ENCODE measurements at regions of chr19 and their contacts with region 1.

Region 1: DNA sequence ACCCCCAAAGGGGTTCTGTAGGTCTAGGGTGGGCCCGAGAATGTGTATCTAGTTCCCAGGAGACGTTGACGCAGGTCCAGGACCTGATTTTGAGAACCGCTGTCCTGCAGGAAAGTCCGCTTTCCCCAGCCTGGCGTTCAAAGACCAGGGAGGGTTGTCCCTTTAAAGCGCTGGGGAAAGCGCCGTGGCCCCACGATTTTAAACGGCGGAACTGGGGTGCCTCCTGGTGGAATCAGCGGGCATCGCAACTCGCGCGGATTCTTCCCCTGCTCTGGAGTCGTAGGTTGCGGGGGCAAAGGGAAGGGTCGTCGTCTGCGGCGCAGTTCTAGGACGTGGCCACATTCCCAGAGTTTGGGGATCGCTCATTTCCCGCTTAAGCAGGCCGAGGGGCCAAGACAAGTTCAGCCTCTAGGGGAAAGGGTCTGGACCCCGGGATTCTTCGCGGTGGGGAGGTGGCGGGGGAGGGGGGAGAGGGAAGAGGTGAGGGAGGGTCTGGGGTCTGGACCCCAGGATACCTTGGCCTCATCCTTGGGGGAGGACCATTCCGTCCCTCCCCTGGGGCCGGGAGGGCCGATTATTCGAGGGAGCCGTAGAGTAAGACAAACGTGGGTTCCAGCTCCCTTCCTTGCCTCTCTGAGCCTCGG is 7.7 kb downstream of the PNMA8B start:
- DNase-seq: peak; percentile 73 to 83
- ATAC-seq: peak; percentile 65 to 92 (median 90)
- H3K4me3 ChIP-seq: no peak overlapping the region
- H3K4me3 Mint-ChIP-seq: no peak overlapping the region
- H3K27ac ChIP-seq: no peak overlapping the region
- H3K27ac Mint-ChIP-seq: no peak overlapping the region
- H3K4me1 ChIP-seq: peaks cover 19% of the 10 kb centered on the region
- H3K4me1 Mint-ChIP-seq: peaks cover 0 to 9% of the 10 kb centered on the region in 2 donors
- H3K27me3 ChIP-seq: peaks cover 49% of the 10 kb centered on the region
- H3K27me3 Mint-ChIP-seq: peaks cover 62 to 63% of the 10 kb centered on the region in 2 donors
- CTCF ChIP-seq: peak; percentile 85

Region 2: GRCh38 chr19:46030812-46031550 is 456.9 kb before region 1 on chr19:
- intact Hi-C with region 1: loop called (anchors 1 kb)
- DNase-seq: no peak
- ATAC-seq: no peak
- H3K4me3 ChIP-seq: no peak overlapping the region
- H3K4me3 Mint-ChIP-seq: no peak overlapping the region
- H3K27ac ChIP-seq: no peak overlapping the region
- H3K27ac Mint-ChIP-seq: no peak overlapping the region
- H3K4me1 ChIP-seq: peaks cover 2% of the 10 kb centered on the region
- H3K4me1 Mint-ChIP-seq: peaks cover 5 to 13% of the 10 kb centered on the region in 2 donors
- H3K27me3 ChIP-seq: peaks cover 5% of the 10 kb centered on the region
- H3K27me3 Mint-ChIP-seq: peaks cover 32 to 34% of the 10 kb centered on the region in 2 donors
- CTCF ChIP-seq: no peak

Region 3: DNA sequence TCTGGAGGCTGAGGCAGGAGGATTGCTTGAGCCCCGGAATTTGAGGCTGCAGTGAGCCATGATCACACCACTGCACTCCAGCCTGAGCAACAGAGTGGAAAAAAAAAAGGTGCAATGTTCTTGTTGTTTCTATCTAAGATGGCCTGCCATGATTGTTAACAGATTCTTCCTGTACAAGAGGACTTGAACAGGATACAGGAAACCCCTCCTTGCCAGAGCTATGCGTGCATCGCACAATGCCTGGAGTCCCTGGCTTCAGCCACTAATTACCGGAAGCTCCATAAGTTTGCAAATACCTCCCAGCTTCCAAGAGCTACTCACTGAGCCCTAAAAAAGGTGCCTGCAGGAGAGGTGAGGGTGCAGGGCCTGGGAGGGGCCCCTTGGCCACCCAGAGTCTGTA is 204.2 kb before region 1 on chr19:
- intact Hi-C with region 1: loop called (anchors 1 kb)
- DNase-seq: no peak
- ATAC-seq: no peak
- H3K4me3 ChIP-seq: no peak overlapping the region
- H3K4me3 Mint-ChIP-seq: no peak overlapping the region
- H3K27ac ChIP-seq: no peak overlapping the region
- H3K27ac Mint-ChIP-seq: no peak overlapping the region
- H3K4me1 ChIP-seq: no peaks in the 10 kb centered on the region
- H3K4me1 Mint-ChIP-seq: no peaks in the 10 kb centered on the region
- H3K27me3 ChIP-seq: no peaks in the 10 kb centered on the region
- H3K27me3 Mint-ChIP-seq: peaks cover 4 to 6% of the 10 kb centered on the region in 2 donors
- CTCF ChIP-seq: no peak

Region 4: GRCh38 chr19:46346821-46347571 is 140.9 kb before region 1 on chr19 and contains the start of gene PPP5C:
- intact Hi-C with region 1: loop called (anchors 1 kb)
- DNase-seq: peak; percentile 83 to 91
- ATAC-seq: peak; percentile 75 to 87 (median 82)
- H3K4me3 ChIP-seq: peak within 1 kb of the TSS; percentile 99
- H3K4me3 Mint-ChIP-seq: peak within 1 kb of the TSS; percentile 94
- H3K27ac ChIP-seq: peak within 1 kb of the TSS; percentile 90
- H3K27ac Mint-ChIP-seq: peak within 1 kb of the TSS; percentile 90 to 94
- H3K4me1 ChIP-seq: peaks cover 54% of the 10 kb centered on the region
- H3K4me1 Mint-ChIP-seq: peaks cover 48 to 54% of the 10 kb centered on the region in 2 donors
- H3K27me3 ChIP-seq: no peaks in the 10 kb centered on the region
- H3K27me3 Mint-ChIP-seq: peaks cover 0 to 4% of the 10 kb centered on the region in 2 donors
- CTCF ChIP-seq: peak; percentile 77
- total RNA-seq, gene PPP5C: 95.4 to 106 (median 98.4) TPM

Region 5: GRCh38 chr19:46392243-46392801 is 95.6 kb before region 1 on chr19:
- intact Hi-C with region 1: loop called (anchors 1 kb)
- DNase-seq: no peak
- ATAC-seq: no peak
- H3K4me3 ChIP-seq: no peak overlapping the region
- H3K4me3 Mint-ChIP-seq: no peak overlapping the region
- H3K27ac ChIP-seq: no peak overlapping the region
- H3K27ac Mint-ChIP-seq: peak overlapping the region; percentile 6 to 34
- H3K4me1 ChIP-seq: peaks cover 4% of the 10 kb centered on the region
- H3K4me1 Mint-ChIP-seq: peaks cover 5 to 6% of the 10 kb centered on the region in 2 donors
- H3K27me3 ChIP-seq: no peaks in the 10 kb centered on the region
- H3K27me3 Mint-ChIP-seq: no peaks in the 10 kb centered on the region
- CTCF ChIP-seq: no peak

Region 6: DNA sequence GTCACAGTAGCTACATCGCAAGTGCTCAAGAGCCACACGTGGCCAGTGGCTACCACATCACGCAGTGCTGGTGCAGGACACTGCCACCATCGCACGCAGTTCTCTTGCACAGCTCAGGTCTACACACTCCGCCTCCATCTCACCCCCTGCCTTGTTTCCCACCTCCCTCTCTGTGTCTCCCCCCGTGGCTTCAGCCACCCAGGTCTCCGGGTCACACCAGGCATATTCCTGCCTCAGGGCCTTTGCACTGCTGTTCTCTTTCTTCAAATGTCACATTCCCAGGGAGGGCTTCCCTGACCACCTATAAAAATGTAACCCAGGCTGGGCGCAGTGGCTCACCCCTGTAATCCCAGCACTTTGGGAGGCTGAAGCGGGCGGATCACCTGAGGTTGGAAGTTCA is 85.2 kb before region 1 on chr19:
- intact Hi-C with region 1: loop called (anchors 2 kb)
- DNase-seq: no peak
- ATAC-seq: no peak
- H3K4me3 ChIP-seq: no peak overlapping the region
- H3K4me3 Mint-ChIP-seq: no peak overlapping the region
- H3K27ac ChIP-seq: no peak overlapping the region
- H3K27ac Mint-ChIP-seq: no peak overlapping the region
- H3K4me1 ChIP-seq: peaks cover 27% of the 10 kb centered on the region
- H3K4me1 Mint-ChIP-seq: peaks cover 22 to 24% of the 10 kb centered on the region in 2 donors
- H3K27me3 ChIP-seq: peaks cover 28% of the 10 kb centered on the region
- H3K27me3 Mint-ChIP-seq: peaks cover 31 to 34% of the 10 kb centered on the region in 2 donors
- CTCF ChIP-seq: no peak

Region 7: DNA sequence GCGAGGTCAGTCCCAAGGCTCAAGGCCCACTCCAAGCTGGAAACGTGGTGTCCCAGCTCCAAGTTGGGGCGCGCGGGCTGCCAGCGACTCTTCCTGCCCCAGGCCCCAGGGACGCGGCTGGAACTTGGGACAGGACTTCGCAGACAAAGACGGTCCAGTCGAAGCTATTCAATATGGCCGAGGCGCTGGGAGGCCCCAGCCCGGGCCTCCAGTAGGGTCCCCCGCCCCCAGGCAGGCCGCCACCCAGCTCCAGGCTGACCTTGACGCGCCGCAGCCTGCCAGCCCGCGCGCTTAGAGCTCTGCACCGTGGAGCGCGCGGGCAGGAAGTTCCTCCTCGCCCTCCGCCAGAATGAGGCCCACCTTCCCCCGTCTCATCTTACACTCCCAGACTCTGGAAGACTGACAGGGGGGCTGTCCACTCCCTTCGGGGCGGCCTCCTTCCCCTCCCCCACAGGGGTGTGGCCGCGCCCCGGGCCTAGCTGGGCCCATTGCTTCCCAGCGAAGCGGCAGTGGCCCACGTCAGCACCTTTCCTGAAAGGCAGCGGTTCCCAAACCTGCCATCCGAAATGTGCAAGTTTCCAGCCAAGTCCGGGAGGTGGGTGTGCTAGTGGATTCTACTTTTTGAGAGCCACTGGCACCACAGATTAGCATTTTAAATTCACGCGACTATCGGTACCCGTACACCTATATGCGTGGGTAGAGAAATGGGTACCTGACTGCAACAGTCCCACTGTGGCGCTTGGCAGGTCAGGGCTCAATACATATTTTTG is 74.5 kb before region 1 on chr19 and contains the start of gene CCDC8:
- intact Hi-C with region 1: no loop called
- DNase-seq: no peak
- ATAC-seq: no peak
- H3K4me3 ChIP-seq: no peak within 1 kb of the TSS
- H3K4me3 Mint-ChIP-seq: no peak within 1 kb of the TSS
- H3K27ac ChIP-seq: no peak within 1 kb of the TSS
- H3K27ac Mint-ChIP-seq: no peak within 1 kb of the TSS
- H3K4me1 ChIP-seq: no peaks in the 10 kb centered on the region
- H3K4me1 Mint-ChIP-seq: no peaks in the 10 kb centered on the region
- H3K27me3 ChIP-seq: peaks cover 41% of the 10 kb centered on the region
- H3K27me3 Mint-ChIP-seq: peaks cover 32 to 54% of the 10 kb centered on the region in 2 donors
- CTCF ChIP-seq: no peak
- total RNA-seq, gene CCDC8: not detected

Region 8: DNA sequence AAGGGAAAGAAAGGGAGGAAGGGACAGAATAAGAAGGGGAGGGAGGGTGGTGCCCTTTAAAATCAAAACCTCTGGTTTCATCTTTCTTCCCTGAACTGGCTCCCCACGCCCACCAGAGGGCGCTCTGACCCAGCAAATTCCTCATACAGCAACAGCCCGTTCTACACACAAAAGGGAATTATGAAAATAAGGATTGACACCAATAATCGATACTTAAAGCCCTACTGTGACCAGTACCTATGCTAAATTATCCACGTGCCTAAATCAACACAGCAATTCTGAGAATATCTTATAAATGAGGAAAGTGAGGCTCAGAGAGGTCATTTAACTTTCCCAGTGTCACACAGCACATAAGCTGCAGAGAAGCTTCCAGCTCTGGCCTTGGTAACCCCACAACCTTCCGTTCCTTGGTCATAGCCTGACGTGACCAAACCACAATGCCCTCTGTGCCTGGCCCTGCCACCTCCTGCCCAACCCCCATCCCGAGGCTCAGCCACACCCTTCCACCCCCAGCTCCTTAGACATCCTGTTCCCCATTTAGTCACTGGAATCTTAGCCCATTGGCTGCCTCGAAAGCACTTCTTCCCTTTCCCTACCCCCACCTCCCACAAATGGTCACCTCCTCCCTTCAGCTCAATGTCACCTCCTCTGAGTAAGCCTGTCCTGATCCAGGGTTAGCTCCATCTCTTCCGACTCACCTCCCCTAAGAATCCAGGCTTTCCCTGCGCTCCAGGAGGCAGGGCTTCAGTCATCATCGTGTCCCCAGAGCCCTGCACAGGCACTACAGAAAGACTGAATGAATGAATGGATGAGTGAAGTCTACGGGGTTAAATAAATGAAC is 41.9 kb after region 1 on chr19:
- intact Hi-C with region 1: no loop called
- DNase-seq: peak; percentile 67 to 89
- ATAC-seq: peak; percentile 59 to 78 (median 70)
- H3K4me3 ChIP-seq: no peak overlapping the region
- H3K4me3 Mint-ChIP-seq: no peak overlapping the region
- H3K27ac ChIP-seq: no peak overlapping the region
- H3K27ac Mint-ChIP-seq: no peak overlapping the region
- H3K4me1 ChIP-seq: peaks cover 21% of the 10 kb centered on the region
- H3K4me1 Mint-ChIP-seq: peaks cover 9 to 12% of the 10 kb centered on the region in 2 donors
- H3K27me3 ChIP-seq: no peaks in the 10 kb centered on the region
- H3K27me3 Mint-ChIP-seq: peaks cover 7 to 10% of the 10 kb centered on the region in 2 donors
- CTCF ChIP-seq: peak; percentile 91

Measured in natural killer cell (primary cell).